ENCODE measurements at regions of chr4 and their contacts with region 1.

Region 1: GRCh38 chr4:85968945-85969819 is 390.7 kb downstream of the MAPK10 start:
- DNase-seq: peak; percentile 14 to 67
- H3K4me3 ChIP-seq: no peak overlapping the region
- H3K4me1 ChIP-seq: no peaks in the 10 kb centered on the region
- H3K27me3 ChIP-seq: no peaks in the 10 kb centered on the region

Region 2: GRCh38 chr4:85419103-85419502 is 550.1 kb before region 1 on chr4:
- in situ Hi-C with region 1: no loop called
- DNase-seq: no peak
- H3K4me3 ChIP-seq: no peak overlapping the region
- H3K4me1 ChIP-seq: no peaks in the 10 kb centered on the region
- H3K27me3 ChIP-seq: no peaks in the 10 kb centered on the region

Region 3: DNA sequence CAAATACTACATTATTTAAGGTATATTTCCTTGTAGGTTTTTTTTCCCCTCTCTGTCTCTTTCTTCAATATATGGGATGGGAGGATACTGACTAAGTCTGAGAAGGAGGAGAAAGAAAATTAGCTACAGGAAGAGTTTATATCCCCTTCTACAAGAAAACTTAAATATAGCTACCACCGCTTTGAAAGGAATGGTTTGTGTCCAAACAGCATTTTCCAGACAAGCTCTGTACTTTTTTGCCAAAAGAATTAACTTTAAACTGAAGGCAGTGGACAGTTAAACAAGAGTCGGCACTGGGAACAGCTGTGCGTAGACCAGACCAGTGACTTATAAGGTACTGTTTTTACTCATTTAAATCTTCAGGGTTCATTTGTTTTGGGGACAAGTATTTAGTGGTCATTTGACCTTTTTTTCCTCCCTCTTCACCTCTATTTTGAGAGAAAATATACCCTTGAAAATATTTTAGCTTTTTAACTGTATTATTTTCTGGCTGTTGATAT is 190.5 kb before region 1 on chr4:
- in situ Hi-C with region 1: loop called (anchors 25 kb)
- DNase-seq: no peak
- H3K4me3 ChIP-seq: no peak overlapping the region
- H3K4me1 ChIP-seq: no peaks in the 10 kb centered on the region
- H3K27me3 ChIP-seq: no peaks in the 10 kb centered on the region

Measured in HAP-1 (cell line).